Ovary (tissue), 10 donors: ENCODE measurements at regions of chr13 and their contacts with region 1.

Region 1: GRCh38 chr13:48580185-48580803 is 47.4 kb upstream of the RCBTB2 start:
- DNase-seq: peak; percentile 66 to 89 (median 74)
- H3K4me3 ChIP-seq: no peak overlapping the region
- H3K27ac ChIP-seq: no peak overlapping the region
- H3K4me1 ChIP-seq: peaks cover 4% of the 10 kb centered on the region
- H3K27me3 ChIP-seq: no peaks in the 10 kb centered on the region
- CTCF ChIP-seq: peak; percentile 36 to 77 (median 67)
- EP300 ChIP-seq: no peak
- POLR2A ChIP-seq: no peak

Region 2: GRCh38 chr13:48126944-48127830 is 453.1 kb before region 1 on chr13:
- intact Hi-C with region 1: loop called in 2 of 4 experiments (anchors 10 kb)
- DNase-seq: peak; percentile 27 to 66 (median 48)
- H3K4me3 ChIP-seq: no peak overlapping the region
- H3K27ac ChIP-seq: peak overlapping the region in 1 of 2 donors; percentile 39
- H3K4me1 ChIP-seq: peaks cover 12% of the 10 kb centered on the region
- H3K27me3 ChIP-seq: no peaks in the 10 kb centered on the region
- CTCF ChIP-seq: peak; percentile 42 to 76 (median 71)
- EP300 ChIP-seq: no peak
- POLR2A ChIP-seq: no peak

Region 3: DNA sequence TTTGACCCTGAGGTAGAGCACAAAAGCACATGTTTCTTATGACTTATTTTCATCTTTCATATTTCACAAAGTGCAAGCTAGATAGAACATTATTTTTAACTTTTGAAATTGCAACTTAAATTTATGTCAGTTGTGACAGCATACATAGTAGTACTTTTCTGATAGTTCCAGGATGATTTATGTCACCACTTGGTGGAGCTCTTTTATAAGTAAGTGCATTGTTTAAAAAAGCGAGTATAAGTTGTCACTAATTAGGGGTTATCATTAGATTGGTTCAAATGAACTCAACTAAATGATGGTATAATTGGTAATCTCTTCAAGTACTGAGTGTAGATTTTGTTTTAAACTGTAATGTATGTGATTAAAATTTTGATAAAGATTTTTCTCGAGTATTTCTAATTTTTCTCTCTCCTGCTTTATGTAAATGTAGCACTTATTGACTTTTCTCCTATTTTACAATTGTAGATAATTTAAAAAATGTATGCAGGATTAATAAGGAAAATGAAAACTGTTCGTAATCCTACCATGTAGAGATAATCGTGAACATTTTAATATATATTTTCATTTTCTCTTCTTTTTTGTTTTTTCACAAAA is 245.7 kb before region 1 on chr13:
- intact Hi-C with region 1: loop called in 2 of 4 experiments (anchors 5 to 10 kb)
- DNase-seq: no peak
- H3K4me3 ChIP-seq: no peak overlapping the region
- H3K27ac ChIP-seq: no peak overlapping the region
- H3K4me1 ChIP-seq: no peaks in the 10 kb centered on the region
- H3K27me3 ChIP-seq: no peaks in the 10 kb centered on the region
- CTCF ChIP-seq: peak; percentile 17 to 65 (median 26)
- EP300 ChIP-seq: no peak
- POLR2A ChIP-seq: no peak

Region 4: DNA sequence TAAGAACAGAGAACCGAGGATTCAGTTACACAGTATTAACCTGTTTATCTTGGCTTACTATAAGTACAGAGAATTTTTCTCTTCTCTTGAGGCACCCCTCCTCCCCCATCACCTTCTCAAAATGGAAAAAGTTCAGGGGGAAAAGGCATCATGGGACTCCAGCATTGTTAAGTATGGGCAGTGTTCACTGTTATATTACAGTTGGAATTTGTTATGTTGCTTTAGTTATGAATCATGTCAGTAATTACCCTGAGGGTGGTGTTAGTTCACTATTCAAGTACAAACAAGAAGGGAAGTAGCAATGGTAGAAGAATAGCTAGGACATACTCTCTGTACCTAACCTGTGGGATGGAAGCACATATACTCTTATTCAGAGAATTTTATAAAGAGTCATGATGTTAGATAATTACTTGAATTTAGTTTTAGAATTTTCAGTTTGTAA is 179.4 kb before region 1 on chr13:
- intact Hi-C with region 1: loop called in 1 of 4 experiments (anchors 10 kb)
- DNase-seq: no peak
- H3K4me3 ChIP-seq: no peak overlapping the region
- H3K27ac ChIP-seq: no peak overlapping the region
- H3K4me1 ChIP-seq: no peaks in the 10 kb centered on the region
- H3K27me3 ChIP-seq: no peaks in the 10 kb centered on the region
- CTCF ChIP-seq: no peak
- EP300 ChIP-seq: no peak
- POLR2A ChIP-seq: no peak

Region 5: GRCh38 chr13:48532506-48533499 is 47.5 kb before region 1 on chr13 and contains the start of gene RCBTB2:
- intact Hi-C with region 1: loop called in 1 of 4 experiments (anchors 5 kb)
- DNase-seq: peak; percentile 99 to 100 (median 99)
- H3K4me3 ChIP-seq: peak within 1 kb of the TSS; percentile 89
- H3K27ac ChIP-seq: peak within 1 kb of the TSS; percentile 92 to 94
- H3K4me1 ChIP-seq: no peaks in the 10 kb centered on the region
- H3K27me3 ChIP-seq: no peaks in the 10 kb centered on the region
- CTCF ChIP-seq: peak in 1 of 3 donors; percentile 14
- EP300 ChIP-seq: no peak
- POLR2A ChIP-seq: peak; percentile 85
- total RNA-seq, gene RCBTB2: 8.2 to 22.6 (median 13.9) TPM

Region 6: GRCh38 chr13:48567515-48568369 is 12.6 kb before region 1 on chr13:
- intact Hi-C with region 1: no loop called
- DNase-seq: peak in 4 of 5 donors; percentile 46 to 71 (median 52)
- H3K4me3 ChIP-seq: no peak overlapping the region
- H3K27ac ChIP-seq: peak overlapping the region in 1 of 2 donors; percentile 75
- H3K4me1 ChIP-seq: peaks cover 8% of the 10 kb centered on the region
- H3K27me3 ChIP-seq: no peaks in the 10 kb centered on the region
- CTCF ChIP-seq: no peak
- EP300 ChIP-seq: no peak
- POLR2A ChIP-seq: no peak

Region 7: DNA sequence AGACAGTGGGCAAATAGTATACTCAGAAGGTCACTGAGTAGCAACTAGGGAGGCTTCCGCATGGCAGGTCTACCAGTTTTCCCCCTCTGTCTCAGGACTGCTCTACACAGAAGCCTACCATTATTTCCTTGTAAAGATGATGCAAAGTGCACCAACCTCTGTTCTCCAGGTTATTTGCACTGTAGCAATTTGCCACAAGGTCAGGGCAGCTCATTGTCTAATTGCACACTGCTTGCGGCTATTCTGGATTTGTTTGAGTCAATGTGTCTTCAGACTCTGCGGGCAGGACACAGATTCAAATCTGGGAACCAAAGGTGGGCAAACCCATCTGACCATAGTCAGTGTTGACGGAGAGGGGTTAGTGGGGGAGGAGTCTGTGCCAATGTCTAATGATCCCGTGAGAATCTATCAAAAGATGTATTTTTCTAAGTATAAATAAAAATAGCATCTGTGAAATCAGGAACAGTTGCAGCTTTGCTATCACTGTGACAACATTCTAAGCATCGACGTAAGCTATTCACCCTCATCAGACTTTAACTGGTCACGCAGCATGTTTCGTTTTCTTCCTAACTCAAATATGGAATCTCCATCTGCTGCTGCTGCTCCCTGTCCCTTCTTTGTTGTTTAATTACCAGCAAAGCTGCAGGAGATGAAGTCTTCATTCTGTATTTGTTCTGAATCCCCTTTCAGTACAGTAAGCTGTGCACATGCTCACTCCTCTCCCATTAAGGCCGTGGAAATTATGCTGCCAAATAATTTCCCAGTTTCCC is 99.8 kb after region 1 on chr13:
- intact Hi-C with region 1: no loop called
- DNase-seq: no peak
- H3K4me3 ChIP-seq: no peak overlapping the region
- H3K27ac ChIP-seq: no peak overlapping the region
- H3K4me1 ChIP-seq: no peaks in the 10 kb centered on the region
- H3K27me3 ChIP-seq: no peaks in the 10 kb centered on the region
- CTCF ChIP-seq: no peak
- EP300 ChIP-seq: no peak
- POLR2A ChIP-seq: no peak